PC-3 (cell line): ENCODE measurements at regions of chr1 and their contacts with region 1.

Region 1: DNA sequence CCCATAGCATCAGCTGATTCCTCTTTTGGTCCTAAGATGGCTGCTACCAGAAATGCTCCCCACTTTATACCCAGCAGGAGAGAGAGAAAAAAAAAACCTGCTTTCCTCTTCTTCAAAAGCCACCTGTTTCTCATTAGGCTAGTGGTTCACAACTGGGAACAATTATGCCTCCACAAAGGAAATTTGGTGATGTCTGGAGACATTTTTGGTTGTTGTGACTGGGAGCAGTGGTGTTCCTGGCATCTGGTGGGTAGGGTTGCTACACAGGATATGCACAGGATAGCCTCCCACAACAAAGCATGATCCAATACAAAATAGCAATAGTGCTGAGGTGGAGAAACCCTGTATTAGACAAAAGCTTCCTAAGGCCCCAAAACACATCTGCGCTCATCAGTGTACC is 38.5 kb upstream of the SGIP1 start:
- DNase-seq: no peak
- ATAC-seq: no peak
- H3K4me3 ChIP-seq: no peak overlapping the region
- H3K27ac ChIP-seq: no peak overlapping the region
- H3K4me1 ChIP-seq: no peaks in the 10 kb centered on the region
- H3K27me3 ChIP-seq: peaks cover 31% of the 10 kb centered on the region
- CTCF ChIP-seq: no peak

Region 2: GRCh38 chr1:66552829-66553228 is 57.3 kb after region 1 on chr1:
- CTCF ChIA-PET with region 1: no interaction called
- POLR2A ChIA-PET with region 1: no interaction called
- intact Hi-C with region 1: no loop called
- DNase-seq: no peak
- ATAC-seq: no peak
- H3K4me3 ChIP-seq: no peak overlapping the region
- H3K27ac ChIP-seq: no peak overlapping the region
- H3K4me1 ChIP-seq: no peaks in the 10 kb centered on the region
- H3K27me3 ChIP-seq: peaks cover 18% of the 10 kb centered on the region; the same call in 1 of the 2 replicates
- CTCF ChIP-seq: no peak

Region 3: DNA sequence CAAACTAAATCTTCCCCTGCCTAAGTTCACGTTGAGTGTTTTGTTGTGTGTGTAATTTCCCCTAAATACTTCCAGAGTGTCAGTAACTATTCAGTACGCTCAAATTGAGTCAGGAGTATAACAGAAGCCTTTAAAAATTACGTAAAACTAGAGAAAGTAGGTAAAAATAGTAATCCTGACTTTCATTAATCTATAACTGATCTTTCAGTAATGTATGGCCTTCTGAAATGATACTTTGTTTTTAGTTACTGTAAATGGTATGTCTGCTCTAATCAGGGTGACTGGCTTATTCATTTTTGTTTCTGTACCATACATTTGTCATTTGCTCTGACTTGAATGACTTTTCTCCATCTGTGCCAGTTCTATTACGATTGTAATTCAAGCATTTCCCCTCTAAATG is 458.7 kb after region 1 on chr1:
- CTCF ChIA-PET with region 1: interaction called, 13 read pairs
- POLR2A ChIA-PET with region 1: no interaction called
- intact Hi-C with region 1: no loop called
- DNase-seq: no peak
- ATAC-seq: no peak
- H3K4me3 ChIP-seq: no peak overlapping the region
- H3K27ac ChIP-seq: no peak overlapping the region
- H3K4me1 ChIP-seq: no peaks in the 10 kb centered on the region
- H3K27me3 ChIP-seq: no peaks in the 10 kb centered on the region
- CTCF ChIP-seq: no peak